ENCODE measurements at regions of chr3 and their contacts with region 1.

Region 1: GRCh38 chr3:16789344-16790120 is 95.2 kb upstream of the PLCL2 start:
- DNase-seq: peak; percentile 14
- H3K4me3 ChIP-seq: no peak overlapping the region
- H3K27ac ChIP-seq: no peak overlapping the region
- H3K4me1 ChIP-seq: no peaks in the 10 kb centered on the region
- CTCF ChIP-seq: no peak

Region 2: DNA sequence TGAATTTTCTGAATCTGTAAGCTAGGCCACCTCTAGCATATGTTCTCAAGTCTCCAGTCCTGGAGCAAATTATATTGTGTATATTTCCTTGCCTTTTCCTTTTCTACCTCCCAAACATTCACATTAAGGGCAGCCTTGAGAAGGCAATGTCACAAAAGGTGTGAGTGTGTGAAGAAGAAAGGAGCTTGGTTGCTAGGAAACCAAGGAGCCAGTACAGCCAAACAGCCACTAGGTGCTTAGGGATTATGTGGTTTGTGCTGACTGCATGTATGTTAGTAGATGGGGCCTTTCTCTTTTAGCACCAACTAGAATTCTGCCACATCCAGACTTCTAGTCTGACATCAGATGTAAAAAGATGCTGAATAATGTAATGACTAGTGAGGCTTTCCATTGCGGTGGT is 65.6 kb before region 1 on chr3:
- CTCF ChIA-PET with region 1: no interaction called
- POLR2A ChIA-PET with region 1: no interaction called
- intact Hi-C with region 1: no loop called
- DNase-seq: peak; percentile 13
- H3K4me3 ChIP-seq: no peak overlapping the region
- H3K27ac ChIP-seq: no peak overlapping the region
- H3K4me1 ChIP-seq: no peaks in the 10 kb centered on the region
- CTCF ChIP-seq: peak; percentile 30; the same call in 1 of the 2 replicates

Region 3: DNA sequence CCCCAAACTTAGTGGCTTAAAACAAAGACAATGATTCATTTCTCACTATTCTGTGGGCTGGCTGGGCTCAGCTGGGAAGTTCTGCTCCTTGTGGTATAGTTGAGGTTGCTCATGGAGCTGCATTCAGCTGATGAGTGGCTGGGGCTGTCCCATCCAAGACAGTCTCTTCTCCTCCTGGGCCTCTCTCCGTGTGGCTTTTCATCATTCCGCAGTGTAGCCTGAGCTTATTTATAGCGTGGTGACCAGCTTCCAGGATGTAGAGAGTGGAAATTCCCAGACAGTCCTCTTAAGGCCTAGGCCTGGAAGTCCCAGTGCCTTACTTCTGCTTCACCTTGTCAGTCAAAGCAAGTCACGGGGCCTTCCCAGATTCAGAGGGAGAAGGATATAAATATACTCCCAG is 47.6 kb before region 1 on chr3:
- CTCF ChIA-PET with region 1: no interaction called
- POLR2A ChIA-PET with region 1: no interaction called
- intact Hi-C with region 1: loop called (anchors 1 kb)
- DNase-seq: no peak
- H3K4me3 ChIP-seq: no peak overlapping the region
- H3K27ac ChIP-seq: no peak overlapping the region
- H3K4me1 ChIP-seq: no peaks in the 10 kb centered on the region
- CTCF ChIP-seq: no peak

Region 4: DNA sequence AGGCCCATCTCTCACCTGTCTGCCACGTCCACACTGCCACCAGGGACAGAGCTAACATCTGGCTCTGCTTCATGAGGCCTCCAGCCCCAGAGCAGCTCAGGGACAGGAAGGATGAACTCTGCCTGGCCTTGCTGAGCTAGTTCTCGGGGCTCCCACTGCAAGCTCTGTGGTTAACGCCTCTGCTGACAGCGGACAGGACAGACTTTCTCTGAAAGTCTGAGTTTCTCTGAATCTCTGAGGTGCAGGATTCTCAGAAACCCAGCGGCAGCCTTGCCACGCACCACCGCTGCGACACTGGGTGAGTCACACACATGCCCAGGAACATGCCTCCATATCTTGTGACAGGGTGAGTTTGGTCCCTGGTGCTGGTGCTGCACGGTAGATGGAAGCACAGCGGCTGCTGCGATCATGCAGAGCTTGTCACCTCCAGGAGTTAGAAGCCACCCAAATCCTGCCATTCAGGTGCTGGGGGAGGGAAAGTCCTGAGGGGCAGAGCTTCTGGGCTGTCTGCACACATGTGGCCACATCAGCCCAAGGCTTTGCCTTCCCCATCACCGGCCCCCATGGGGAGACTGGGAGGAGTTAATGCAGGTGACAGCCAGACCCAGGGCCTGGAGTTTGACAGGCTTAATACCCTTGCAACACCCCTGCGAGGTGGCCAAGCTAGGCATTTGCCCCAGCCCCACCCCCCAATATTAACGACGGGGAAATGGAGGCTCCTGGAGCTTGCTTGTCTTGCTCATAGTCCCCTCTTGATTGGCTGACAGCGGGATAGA is 362.3 kb after region 1 on chr3:
- CTCF ChIA-PET with region 1: no interaction called
- POLR2A ChIA-PET with region 1: no interaction called
- intact Hi-C with region 1: no loop called
- DNase-seq: no peak
- H3K4me3 ChIP-seq: no peak overlapping the region
- H3K27ac ChIP-seq: no peak overlapping the region
- H3K4me1 ChIP-seq: no peaks in the 10 kb centered on the region
- CTCF ChIP-seq: no peak